ENCODE measurements at regions of chr12 and their contacts with region 1.

Region 1: DNA sequence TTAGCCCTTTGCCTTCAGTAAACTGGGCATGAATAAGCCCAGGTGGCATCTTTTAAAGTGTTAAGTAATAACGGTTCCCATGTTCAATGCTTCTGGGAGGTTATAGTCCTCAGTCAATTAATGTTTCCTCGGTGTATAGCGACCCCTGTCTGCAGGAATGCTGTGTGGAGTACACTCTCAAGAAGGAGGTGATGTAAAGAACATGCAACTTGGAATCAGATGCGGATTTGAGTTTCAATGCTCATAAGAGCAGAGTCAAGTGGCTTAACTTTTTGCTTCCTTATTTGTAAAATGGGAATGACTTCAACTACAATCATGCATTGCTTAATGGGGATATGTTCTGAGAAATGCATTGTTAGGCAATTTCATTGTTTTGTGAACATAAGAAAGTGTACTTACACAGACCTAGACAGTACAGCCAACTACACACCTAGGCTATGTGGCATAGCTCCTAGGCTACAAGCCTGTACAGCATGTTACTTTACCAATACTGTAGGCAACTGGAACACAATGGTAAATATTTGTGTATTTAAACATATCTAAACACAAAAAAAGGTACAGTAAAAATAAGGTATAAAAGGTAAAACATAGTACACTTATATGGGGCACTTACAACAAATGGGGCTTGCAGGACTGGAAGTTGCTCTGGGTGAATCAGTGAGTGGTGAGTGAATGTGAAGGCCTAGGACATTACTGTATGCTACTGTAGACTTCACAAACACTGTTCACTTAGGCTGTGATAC is 6.8 kb upstream of the MRPS35 start:
- DNase-seq: peak; percentile 92
- H3K4me3 Mint-ChIP-seq: no peak overlapping the region
- H3K27ac Mint-ChIP-seq: no peak overlapping the region
- H3K4me1 Mint-ChIP-seq: peaks cover 2% of the 10 kb centered on the region
- H3K27me3 Mint-ChIP-seq: no peaks in the 10 kb centered on the region

Region 2: DNA sequence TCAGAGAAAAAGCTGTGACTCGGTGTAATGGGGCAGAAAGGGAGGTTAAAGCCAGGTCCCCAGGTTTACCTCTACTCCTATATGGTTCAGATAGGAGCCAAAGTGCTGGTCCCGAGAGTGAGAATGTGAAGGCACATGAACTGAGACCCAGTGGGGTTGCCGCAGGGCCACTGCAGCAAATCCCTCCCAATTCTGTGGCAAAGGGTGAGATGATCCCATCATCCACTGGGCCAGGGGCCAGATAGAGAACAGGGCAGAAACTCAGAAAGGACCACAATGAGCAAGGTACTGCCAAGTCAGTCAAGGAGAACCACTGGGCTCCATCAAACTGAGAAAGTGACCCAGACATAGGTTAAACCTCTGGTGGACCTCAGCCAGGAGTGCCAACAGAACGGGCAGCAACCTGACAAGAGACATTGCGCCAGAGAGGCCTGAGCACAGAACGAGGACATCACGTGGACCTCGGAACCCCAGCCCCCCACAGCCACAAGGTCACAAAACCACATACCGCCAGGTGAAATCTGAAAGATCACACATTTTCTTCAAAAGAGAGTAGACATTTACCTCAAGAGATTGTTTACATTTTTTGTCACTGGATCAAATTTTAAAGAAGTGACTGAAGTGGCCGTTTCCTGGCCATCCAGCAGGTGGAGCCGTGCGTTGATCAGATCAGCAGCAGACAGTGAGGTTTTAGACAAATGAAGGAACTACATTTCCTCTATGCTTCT is 850.4 kb before region 1 on chr12:
- CTCF ChIA-PET with region 1: no interaction called
- intact Hi-C with region 1: loop called (anchors 5 kb)
- DNase-seq: peak; percentile 86
- H3K4me3 Mint-ChIP-seq: no peak overlapping the region
- H3K27ac Mint-ChIP-seq: no peak overlapping the region
- H3K4me1 Mint-ChIP-seq: no peaks in the 10 kb centered on the region
- H3K27me3 Mint-ChIP-seq: peaks cover 3% of the 10 kb centered on the region

Region 3: DNA sequence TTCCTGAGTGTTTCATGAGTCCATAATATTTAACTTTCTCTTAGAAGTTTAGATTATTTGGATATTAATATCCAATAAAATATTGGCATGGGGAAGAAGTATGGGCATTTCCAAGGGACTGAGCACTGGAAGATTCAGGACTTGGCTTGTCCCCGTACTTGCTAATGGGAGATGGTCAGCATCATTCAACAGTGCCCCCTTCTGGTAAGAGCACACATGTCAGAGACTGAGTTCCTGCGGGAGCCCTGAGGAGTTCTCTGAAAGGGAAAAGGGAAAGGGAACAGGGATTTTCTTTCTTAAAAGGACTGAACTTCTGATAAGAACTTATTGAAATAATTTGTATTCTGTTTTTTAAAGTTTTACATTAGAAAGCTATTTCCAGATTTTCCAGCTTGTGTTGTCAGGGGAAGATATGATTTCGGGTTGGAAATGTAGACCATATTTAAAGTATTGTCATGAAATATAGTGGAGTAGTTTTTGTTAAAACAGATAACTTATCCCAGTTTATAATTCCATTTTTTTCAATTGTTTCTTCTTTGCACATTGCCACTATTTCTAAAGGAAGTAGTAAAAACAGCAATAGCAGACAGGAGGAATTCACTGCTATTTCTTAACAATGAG is 561.7 kb before region 1 on chr12:
- CTCF ChIA-PET with region 1: interaction called, 3 read pairs
- intact Hi-C with region 1: loop called (anchors 10 kb)
- DNase-seq: peak; percentile 61
- H3K4me3 Mint-ChIP-seq: no peak overlapping the region
- H3K27ac Mint-ChIP-seq: no peak overlapping the region
- H3K4me1 Mint-ChIP-seq: peaks cover 10% of the 10 kb centered on the region
- H3K27me3 Mint-ChIP-seq: no peaks in the 10 kb centered on the region

Region 4: DNA sequence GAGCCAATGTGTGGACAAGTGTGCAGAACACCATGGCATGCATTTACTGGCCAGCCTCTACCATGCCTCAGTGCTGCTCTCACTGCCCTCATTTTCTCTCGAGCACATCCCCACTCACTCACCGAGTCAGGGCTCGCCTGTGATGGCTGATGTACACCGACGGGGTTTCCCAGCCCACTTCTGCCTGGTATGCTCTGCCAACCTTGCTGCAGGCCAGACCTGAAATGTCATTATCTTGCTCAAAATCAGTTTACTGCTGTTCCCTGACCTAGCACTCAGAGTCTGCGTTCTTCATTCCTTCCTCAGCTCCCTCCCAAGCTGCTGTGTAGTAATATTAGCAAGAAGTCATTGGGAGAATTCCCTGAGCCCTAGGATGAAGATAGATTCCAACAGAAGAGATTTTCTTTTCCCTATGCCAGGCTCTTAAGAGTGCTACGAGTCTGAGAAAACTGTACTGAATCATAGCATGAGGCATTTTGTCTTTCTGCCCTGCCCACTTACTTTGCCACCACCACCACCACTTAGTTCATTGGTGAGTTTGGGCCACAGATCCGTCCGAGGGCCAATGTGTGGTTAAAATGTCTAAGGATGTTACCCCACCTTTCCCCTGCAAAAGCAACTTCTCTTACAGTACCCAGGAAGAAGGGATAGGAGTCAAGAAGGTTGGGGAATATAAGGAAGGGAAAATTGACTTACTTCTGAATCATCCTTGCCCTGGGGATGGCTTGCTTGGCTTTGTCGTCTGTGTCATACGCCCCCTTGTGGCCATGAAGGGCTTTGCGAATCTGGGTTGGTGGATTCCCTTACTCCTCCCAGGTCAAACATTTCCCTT is 320.2 kb before region 1 on chr12:
- CTCF ChIA-PET with region 1: interaction called, 3 read pairs
- intact Hi-C with region 1: loop called (anchors 1 kb)
- DNase-seq: peak; percentile 84
- H3K4me3 Mint-ChIP-seq: no peak overlapping the region
- H3K27ac Mint-ChIP-seq: no peak overlapping the region
- H3K4me1 Mint-ChIP-seq: no peaks in the 10 kb centered on the region
- H3K27me3 Mint-ChIP-seq: peaks cover 4% of the 10 kb centered on the region

Region 5: DNA sequence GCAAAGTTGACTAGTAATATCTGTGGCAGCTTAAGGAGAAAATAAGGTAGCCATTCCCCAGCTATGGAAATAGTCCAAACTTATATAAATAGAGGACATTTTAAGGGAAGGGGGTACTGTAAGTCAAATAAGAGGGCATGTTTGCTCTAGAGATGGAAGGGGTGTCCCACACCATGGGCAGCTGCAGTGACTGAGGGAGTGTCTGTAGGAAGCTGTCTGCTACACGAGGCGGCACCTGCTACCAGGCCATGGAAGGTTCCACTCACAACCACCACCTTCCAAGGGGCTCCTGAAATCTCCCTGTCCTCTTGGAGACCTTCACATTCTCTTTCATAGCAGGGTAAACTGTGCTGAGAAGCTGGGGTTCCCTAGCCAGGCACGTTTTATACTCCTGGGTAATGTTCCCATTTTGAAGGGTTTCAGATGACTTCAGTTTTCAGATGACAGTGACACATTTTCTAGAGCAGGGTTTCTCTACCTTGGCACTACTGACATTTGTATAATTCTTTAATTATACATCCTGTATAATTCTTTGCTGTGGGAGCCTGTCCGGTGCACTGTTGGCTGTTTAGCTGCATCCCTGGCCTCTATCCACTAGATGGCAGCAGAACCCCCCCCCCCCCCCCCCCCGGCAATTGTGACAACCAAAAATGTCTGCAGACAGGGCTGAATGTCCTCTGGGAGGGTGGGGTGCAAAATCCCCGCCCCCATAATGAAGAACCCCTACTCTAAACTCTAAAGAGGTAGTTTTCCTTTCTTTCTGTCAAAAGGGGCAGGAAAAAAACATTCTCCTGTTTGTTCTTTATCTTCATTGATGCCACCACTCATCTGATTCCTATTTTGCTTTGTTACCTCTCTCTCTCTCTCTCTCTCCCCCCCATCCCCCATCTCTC is 269.0 kb before region 1 on chr12:
- CTCF ChIA-PET with region 1: interaction called, 11 read pairs
- intact Hi-C with region 1: loop called (anchors 1 kb)
- DNase-seq: peak; percentile 37
- H3K4me3 Mint-ChIP-seq: no peak overlapping the region
- H3K27ac Mint-ChIP-seq: no peak overlapping the region
- H3K4me1 Mint-ChIP-seq: peaks cover 17% of the 10 kb centered on the region
- H3K27me3 Mint-ChIP-seq: peaks cover 2% of the 10 kb centered on the region

Region 6: DNA sequence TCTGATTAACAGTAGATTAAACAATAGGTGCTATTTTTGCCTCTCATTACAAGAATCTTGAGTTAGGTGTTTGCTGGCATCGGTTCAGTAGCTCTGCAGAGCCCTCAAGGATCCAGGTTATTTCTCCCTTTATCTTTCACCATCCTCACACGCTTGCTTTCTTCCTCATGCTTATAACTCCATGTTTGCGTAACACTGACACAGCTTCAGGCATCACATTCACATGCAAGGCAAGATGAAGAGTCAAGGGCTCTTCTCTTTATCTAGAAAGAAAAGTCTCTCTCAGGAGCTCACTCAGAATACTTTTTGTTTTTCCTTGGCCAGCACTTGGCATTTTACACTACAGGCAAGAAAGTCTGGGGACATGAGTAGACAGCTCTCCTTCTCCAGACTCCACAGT is 292.9 kb after region 1 on chr12:
- CTCF ChIA-PET with region 1: no interaction called
- intact Hi-C with region 1: no loop called
- DNase-seq: no peak
- H3K4me3 Mint-ChIP-seq: no peak overlapping the region
- H3K27ac Mint-ChIP-seq: no peak overlapping the region
- H3K4me1 Mint-ChIP-seq: no peaks in the 10 kb centered on the region
- H3K27me3 Mint-ChIP-seq: no peaks in the 10 kb centered on the region

Measured in activated naive CD4-positive, alpha-beta T cell treated with anti-CD3 and anti-CD28 coated beads for 36 hours (primary cell).